K562 (cell line): ENCODE measurements at regions of chr14 and their contacts with region 1.

Region 1: DNA sequence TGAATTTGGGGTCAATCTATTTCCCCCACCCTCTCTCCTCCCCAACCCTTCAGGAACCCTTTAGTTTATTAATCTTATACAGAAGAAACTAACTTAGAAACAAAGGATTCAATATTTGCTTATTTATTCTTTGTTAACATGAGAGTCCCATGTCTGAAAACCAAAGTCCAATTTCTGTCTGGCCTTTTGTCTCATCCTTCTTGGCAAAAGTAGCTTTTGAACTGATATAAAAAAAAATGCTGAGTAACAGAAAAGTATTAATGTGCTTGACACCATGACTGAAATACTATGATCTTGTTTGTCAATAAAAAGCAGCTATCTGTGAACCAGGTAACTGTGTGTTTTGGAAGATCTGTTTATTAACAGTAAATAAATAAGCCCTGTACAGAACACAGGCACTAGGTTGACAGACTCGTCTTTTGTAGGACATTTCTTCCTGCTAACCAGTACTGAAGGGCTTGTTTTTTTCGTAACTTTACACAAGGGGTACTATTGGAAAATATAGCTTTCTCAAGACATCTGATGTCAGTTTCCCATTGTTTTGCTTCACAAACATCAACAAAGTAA is 10.8 kb downstream of the PIGH start:
- DNase-seq: no peak
- ATAC-seq: no peak
- H3K4me3 ChIP-seq: no peak overlapping the region
- H3K27ac ChIP-seq: 0 out of 3 replicates have a peak overlapping the region, but pooled peaks have one; percentile 22
- H3K4me1 ChIP-seq: peaks cover 0 to 8% of the 10 kb centered on the region in 2 experiments; a peak in 2 of 5 replicates
- H3K27me3 ChIP-seq: no peaks in the 10 kb centered on the region
- CTCF ChIP-seq: no peak
- EP300 ChIP-seq: no peak
- POLR2A ChIP-seq: no peak
- RAD21 ChIP-seq: no peak

Region 2: GRCh38 chr14:67599698-67600561 is 10.6 kb after region 1 on chr14 and contains the start of gene PIGH:
- CTCF ChIA-PET with region 1: no interaction called
- POLR2A ChIA-PET with region 1: interaction called, 10 read pairs
- in situ Hi-C with region 1: no loop called
- intact Hi-C with region 1: no loop called
- DNase-seq: peak; percentile 89 to 92 (median 90)
- ATAC-seq: peak; percentile 98
- H3K4me3 ChIP-seq: peak within 1 kb of the TSS; percentile 93
- H3K27ac ChIP-seq: peak within 1 kb of the TSS; percentile 87
- H3K4me1 ChIP-seq: peaks cover 11 to 12% of the 10 kb centered on the region in 2 experiments; a peak in 4 of 5 replicates
- H3K27me3 ChIP-seq: no peaks in the 10 kb centered on the region
- CTCF ChIP-seq: peak; percentile 69 to 97 (median 81)
- EP300 ChIP-seq: no peak
- POLR2A ChIP-seq: peak; percentile 73
- RAD21 ChIP-seq: peak; percentile 38 to 53; a peak in 3 of 4 replicates
- polyA plus RNA-seq, gene PIGH: 23.6 to 30.6 TPM